H1 (cell line): ENCODE measurements at regions of chr20 and their contacts with region 1.

Region 1: DNA sequence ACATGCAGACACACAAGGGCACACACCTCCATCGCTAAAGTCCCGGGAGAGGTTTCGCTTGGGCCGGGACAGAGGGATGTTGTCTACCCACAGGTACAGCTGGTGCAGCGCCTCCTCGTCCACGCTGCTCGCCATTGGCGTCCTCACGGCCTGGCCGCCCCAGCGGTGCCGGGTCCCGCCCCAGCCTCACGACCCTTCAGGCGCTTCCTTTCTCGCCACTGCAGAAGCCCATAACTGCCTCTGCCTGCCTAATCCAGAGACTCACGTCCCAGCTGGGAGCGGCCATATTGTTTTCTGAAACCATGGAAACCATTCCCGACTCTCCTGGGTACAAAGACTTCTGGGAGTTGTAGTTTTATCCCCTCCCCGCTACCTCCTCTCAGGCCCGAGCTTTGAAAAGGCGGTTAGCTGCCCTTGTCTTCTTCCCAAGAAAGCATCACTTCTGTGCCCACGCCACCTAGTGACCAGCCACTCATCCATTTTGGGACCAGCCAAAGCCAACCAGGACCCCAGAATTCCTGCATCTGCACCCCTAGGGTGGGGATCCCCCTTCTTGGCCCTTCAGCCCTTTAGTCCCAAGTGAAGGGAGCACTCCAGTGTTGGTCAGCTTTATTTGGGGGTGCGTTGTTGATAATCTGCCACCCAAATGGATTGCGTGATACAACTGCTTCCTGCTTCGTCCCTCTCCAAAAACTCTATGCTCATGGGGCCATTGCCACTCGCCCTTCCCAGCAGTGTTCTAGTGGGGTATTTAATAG is at the start of gene SPEF1:
- DNase-seq: peak; percentile 81 to 84
- H3K4me3 ChIP-seq: peak within 1 kb of the TSS; percentile 6 to 53 (median 43); a peak in 7 of 8 replicates
- H3K27ac ChIP-seq: no peak within 1 kb of the TSS
- H3K4me1 ChIP-seq: peaks cover 0 to 23% (median 15%) of the 10 kb centered on the region in 4 experiments; a peak in 6 of 7 replicates
- H3K27me3 ChIP-seq: peaks cover 0 to 30% (median 26%) of the 10 kb centered on the region in 4 experiments; a peak in 6 of 7 replicates
- CTCF ChIP-seq: peak; percentile 41 to 71 (median 59); a peak in 3 of 4 replicates
- EP300 ChIP-seq: no peak
- POLR2A ChIP-seq: no peak
- RAD21 ChIP-seq: peak; percentile 38 to 39
- total RNA-seq, gene SPEF1: 0.65 and 0.71 TPM in 2 replicates

Region 2: GRCh38 chr20:3532089-3532615 is 249.2 kb before region 1 on chr20:
- CTCF ChIA-PET with region 1: no interaction called
- POLR2A ChIA-PET with region 1: no interaction called
- DNase-seq: no peak
- H3K4me3 ChIP-seq: no peak overlapping the region
- H3K27ac ChIP-seq: no peak overlapping the region
- H3K4me1 ChIP-seq: no peaks in the 10 kb centered on the region
- H3K27me3 ChIP-seq: no peaks in the 10 kb centered on the region
- CTCF ChIP-seq: no peak
- EP300 ChIP-seq: no peak
- POLR2A ChIP-seq: no peak
- RAD21 ChIP-seq: no peak

Region 3: DNA sequence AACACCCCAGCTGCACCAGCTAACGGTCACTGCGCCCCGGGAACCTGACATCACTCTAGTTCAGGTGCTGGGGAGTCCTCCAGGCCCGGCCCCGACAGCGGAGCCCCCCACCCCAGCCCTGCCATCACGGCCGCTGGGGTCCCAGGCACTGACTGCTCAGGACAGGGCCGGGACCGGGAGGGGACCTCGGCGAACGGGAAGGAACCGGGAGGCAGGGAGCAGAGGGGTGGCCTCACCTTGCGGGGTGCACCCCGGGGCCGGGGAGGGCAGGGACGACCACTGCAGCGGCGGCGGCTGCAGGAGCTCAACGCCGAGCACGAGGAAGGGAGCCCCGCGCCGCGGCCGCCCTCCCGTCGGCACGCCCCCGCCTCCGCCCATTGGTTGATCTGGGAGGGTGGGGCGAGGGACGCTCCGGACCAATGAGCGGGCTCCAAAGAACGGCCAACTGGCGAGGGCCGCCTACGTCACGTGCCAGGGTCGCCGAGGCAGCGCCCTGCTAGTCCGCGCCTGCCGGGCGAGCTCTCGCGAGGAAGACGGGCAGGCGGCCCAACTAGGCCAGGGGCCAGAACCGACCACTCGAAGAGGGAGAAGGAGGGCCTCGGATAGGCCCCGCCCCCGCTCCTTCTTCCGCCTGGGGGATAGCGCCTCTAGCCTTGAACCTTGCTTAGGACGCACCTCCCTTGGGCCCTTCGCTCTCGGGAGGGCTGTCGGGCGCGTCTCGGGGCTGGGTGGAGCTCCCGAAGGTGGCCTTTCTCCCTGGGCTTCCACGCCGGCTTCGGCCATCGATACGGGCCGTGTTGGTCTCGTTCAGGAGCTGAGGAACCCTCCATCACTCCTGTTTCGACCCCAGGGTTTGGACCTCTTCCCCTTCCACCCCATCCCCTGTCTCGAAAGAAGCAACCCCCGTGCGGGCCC is 13.6 kb before region 1 on chr20 and contains the start of gene ADISSP:
- CTCF ChIA-PET with region 1: interaction called, 23 read pairs
- POLR2A ChIA-PET with region 1: interaction called, 42 read pairs
- DNase-seq: peak; percentile 97
- H3K4me3 ChIP-seq: peak within 1 kb of the TSS; percentile 74 to 94 (median 88)
- H3K27ac ChIP-seq: peak within 1 kb of the TSS; percentile 66; the same call in 1 of the 2 replicates
- H3K4me1 ChIP-seq: peaks cover 3 to 15% (median 6%) of the 10 kb centered on the region in 4 experiments; a peak in 6 of 7 replicates
- H3K27me3 ChIP-seq: no peaks in the 10 kb centered on the region
- CTCF ChIP-seq: peak in 2 of 3 experiments; percentile 13 to 35; a peak in 2 of 4 replicates
- EP300 ChIP-seq: no peak
- POLR2A ChIP-seq: peak in 1 of 2 experiments; percentile 71; a peak in 2 of 3 replicates
- RAD21 ChIP-seq: no peak
- total RNA-seq, gene ADISSP: 111 and 117 TPM in 2 replicates

Region 4: DNA sequence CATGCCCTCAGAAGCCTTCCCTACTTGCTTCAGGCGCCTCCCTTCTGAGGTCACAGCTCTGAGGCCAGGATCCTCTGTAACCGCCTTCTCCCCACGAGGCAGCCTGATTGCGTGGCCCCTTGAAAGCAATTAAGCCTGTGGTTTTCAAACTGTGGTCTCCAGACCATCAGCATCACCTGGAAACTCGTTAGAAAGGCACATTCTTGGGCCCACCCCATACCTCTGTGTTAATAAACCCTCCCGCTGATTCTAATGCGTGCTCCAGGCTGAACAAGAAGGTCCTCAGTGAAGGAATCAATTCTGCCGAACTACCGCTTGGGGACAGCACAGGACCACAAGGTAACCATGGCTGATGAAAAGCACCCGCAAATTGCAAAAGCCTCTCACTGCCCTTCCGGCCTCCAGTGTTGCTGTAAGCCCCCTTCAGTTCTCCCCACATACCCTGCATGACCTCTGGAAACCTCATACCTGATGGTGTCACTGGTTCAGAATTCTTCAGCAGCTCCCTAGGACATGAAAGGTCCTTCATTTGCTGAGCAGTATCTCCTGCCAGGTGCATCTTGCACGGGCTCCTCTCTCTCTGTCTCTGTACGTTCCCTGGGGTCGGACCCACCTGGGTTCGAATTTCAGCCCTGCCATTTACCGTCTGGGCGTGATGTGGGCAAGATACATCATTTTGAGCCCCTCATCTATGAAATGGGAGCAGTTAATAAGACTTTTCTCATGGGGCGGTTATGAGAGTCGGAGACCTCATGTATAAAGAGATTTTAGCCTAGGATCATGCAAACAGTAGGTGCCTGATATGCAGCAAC is 327.4 kb after region 1 on chr20:
- CTCF ChIA-PET with region 1: no interaction called
- POLR2A ChIA-PET with region 1: no interaction called
- DNase-seq: peak; percentile 73 to 74
- H3K4me3 ChIP-seq: no peak overlapping the region
- H3K27ac ChIP-seq: no peak overlapping the region
- H3K4me1 ChIP-seq: peaks cover 0 to 6% (median 4%) of the 10 kb centered on the region in 4 experiments; a peak in 3 of 7 replicates
- H3K27me3 ChIP-seq: no peaks in the 10 kb centered on the region; a peak in 1 of 7 replicates
- CTCF ChIP-seq: peak; percentile 83 to 99 (median 97)
- EP300 ChIP-seq: peak in 1 of 2 experiments; percentile 66; a peak in 1 of 3 replicates
- POLR2A ChIP-seq: peak in 1 of 2 experiments; percentile 36; a peak in 1 of 3 replicates
- RAD21 ChIP-seq: peak; percentile 99 to 100